Mammary epithelial cell (primary cell): ENCODE measurements at regions of chr18 and their contacts with region 1.

Region 1: GRCh38 chr18:24426398-24427294 is at the start of gene IMPACT:
- DNase-seq: peak; percentile 76
- H3K4me3 ChIP-seq: peak within 1 kb of the TSS; percentile 83 to 95 (median 87)
- H3K27ac ChIP-seq: peak within 1 kb of the TSS; percentile 88
- H3K4me1 ChIP-seq: peaks cover 12% of the 10 kb centered on the region
- H3K27me3 ChIP-seq: no peaks in the 10 kb centered on the region
- CTCF ChIP-seq: no peak
- total RNA-seq, gene IMPACT: 38.8 to 45.2 TPM

Region 2: DNA sequence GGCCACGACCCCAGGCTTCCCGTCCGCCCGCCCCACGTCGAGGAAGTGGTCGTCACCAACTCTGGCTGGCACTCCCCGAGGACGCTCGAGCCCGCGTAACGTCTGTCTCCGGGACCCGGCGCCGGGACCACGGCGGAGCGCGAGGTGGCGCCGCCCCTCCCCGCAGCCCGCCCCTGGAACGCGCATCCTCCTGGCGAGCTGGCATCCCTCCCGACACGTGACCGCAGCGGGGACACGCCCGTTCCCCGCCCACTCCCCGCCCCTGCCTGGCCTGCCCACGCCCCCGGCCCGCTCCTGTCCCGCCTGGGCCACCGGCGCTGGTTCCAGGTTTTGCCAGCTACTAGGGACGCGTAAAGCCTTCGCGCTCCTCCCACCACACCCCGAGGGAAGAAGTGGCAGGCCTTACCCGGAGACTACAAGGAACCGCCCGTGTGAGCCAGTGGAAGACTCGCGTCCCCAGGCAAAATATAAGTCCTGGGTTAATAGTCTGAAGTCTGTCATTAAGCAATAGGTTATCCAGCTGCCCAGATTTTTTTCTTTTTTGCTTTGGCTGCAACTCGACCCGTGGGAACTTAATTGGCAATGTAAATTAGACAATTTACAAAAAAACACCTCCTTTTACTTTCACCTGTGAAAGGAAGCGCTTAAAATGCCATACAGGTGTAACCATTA is 28.8 kb before region 1 on chr18 and contains the start of gene OSBPL1A:
- CTCF ChIA-PET with region 1: no interaction called
- dilution Hi-C with region 1: no loop called
- in situ Hi-C with region 1: no loop called
- intact Hi-C with region 1: loop called (anchors 1 kb)
- DNase-seq: peak; percentile 86
- H3K4me3 ChIP-seq: peak within 1 kb of the TSS; percentile 49 to 89 (median 73)
- H3K27ac ChIP-seq: peak within 1 kb of the TSS; percentile 57
- H3K4me1 ChIP-seq: peaks cover 17% of the 10 kb centered on the region
- H3K27me3 ChIP-seq: no peaks in the 10 kb centered on the region
- CTCF ChIP-seq: no peak
- total RNA-seq, gene OSBPL1A: 30.4 to 65.2 TPM

Region 3: DNA sequence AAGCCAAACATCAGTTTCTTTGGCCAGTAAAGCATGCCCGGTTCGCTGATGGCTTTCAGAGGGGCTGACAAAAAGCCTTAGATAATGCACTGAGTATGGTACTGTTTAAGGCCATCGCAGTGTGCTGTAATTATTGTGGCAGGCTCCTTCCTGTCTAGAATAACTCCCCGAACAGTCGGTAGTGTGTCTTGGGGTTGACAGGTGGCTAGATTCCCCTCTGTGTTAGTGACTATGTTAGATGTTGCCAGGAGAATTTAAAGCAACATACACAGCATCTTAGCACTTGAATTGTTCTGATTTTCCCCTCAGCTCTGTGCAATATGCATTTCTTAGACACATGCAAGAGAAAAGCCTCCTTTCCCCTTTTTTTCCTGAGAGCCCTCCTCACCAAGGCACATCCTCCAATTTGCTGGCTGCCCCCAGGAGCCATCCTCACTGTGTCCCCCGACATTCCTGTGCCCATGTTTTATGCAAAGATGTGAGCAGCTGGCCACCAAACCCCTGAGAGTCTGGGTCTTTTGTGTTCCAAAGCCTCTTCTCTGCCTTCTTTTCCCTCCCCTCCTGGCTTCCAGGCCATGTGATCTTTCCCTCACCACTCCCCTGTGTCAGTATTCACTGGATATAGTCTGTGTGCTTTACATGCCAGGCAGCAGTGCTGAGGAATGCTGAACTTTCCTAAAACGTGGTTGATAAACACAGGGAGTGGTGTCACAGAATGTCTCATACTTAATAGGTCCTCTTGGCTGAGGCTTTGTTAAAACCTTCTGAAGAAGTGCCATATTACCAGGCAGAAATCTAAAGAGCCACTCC is 365.3 kb after region 1 on chr18:
- CTCF ChIA-PET with region 1: no interaction called
- dilution Hi-C with region 1: no loop called
- in situ Hi-C with region 1: no loop called
- intact Hi-C with region 1: no loop called
- DNase-seq: no peak
- H3K4me3 ChIP-seq: no peak overlapping the region
- H3K27ac ChIP-seq: no peak overlapping the region
- H3K4me1 ChIP-seq: no peaks in the 10 kb centered on the region
- H3K27me3 ChIP-seq: peaks cover 3% of the 10 kb centered on the region
- CTCF ChIP-seq: no peak